ENCODE measurements at regions of chr3 and their contacts with region 1.

Region 1: GRCh38 chr3:98039322-98040024 is 4.4 kb upstream of the GABRR3 start:
- DNase-seq: peak; percentile 20 to 65 (median 47)
- ATAC-seq: peak; percentile 87
- H3K4me3 ChIP-seq: no peak overlapping the region
- H3K27ac ChIP-seq: no peak overlapping the region
- H3K4me1 ChIP-seq: no peaks in the 10 kb centered on the region
- H3K27me3 ChIP-seq: no peaks in the 10 kb centered on the region
- CTCF ChIP-seq: peak; percentile 55 to 72 (median 56)
- EP300 ChIP-seq: no peak
- POLR2A ChIP-seq: no peak
- RAD21 ChIP-seq: peak; percentile 59 to 73

Region 2: GRCh38 chr3:98027085-98027446 is 12.4 kb before region 1 on chr3:
- CTCF ChIA-PET with region 1: no interaction called
- POLR2A ChIA-PET with region 1: no interaction called
- in situ Hi-C with region 1: no loop called
- intact Hi-C with region 1: no loop called
- DNase-seq: no peak
- ATAC-seq: no peak
- H3K4me3 ChIP-seq: no peak overlapping the region
- H3K27ac ChIP-seq: no peak overlapping the region
- H3K4me1 ChIP-seq: no peaks in the 10 kb centered on the region
- H3K27me3 ChIP-seq: no peaks in the 10 kb centered on the region
- CTCF ChIP-seq: no peak
- EP300 ChIP-seq: no peak
- POLR2A ChIP-seq: no peak
- RAD21 ChIP-seq: no peak

Region 3: GRCh38 chr3:98329392-98330124 is 290.1 kb after region 1 on chr3:
- CTCF ChIA-PET with region 1: interaction called, 5 read pairs
- POLR2A ChIA-PET with region 1: no interaction called
- in situ Hi-C with region 1: loop called (anchors 5 kb)
- intact Hi-C with region 1: loop called (anchors 1 kb)
- DNase-seq: peak; percentile 8 to 42 (median 10)
- ATAC-seq: peak; percentile 70
- H3K4me3 ChIP-seq: no peak overlapping the region
- H3K27ac ChIP-seq: no peak overlapping the region
- H3K4me1 ChIP-seq: no peaks in the 10 kb centered on the region
- H3K27me3 ChIP-seq: no peaks in the 10 kb centered on the region
- CTCF ChIP-seq: peak; percentile 48 to 57 (median 56)
- EP300 ChIP-seq: no peak
- POLR2A ChIP-seq: no peak
- RAD21 ChIP-seq: peak; percentile 39 to 59; a peak in 3 of 4 replicates

Region 4: DNA sequence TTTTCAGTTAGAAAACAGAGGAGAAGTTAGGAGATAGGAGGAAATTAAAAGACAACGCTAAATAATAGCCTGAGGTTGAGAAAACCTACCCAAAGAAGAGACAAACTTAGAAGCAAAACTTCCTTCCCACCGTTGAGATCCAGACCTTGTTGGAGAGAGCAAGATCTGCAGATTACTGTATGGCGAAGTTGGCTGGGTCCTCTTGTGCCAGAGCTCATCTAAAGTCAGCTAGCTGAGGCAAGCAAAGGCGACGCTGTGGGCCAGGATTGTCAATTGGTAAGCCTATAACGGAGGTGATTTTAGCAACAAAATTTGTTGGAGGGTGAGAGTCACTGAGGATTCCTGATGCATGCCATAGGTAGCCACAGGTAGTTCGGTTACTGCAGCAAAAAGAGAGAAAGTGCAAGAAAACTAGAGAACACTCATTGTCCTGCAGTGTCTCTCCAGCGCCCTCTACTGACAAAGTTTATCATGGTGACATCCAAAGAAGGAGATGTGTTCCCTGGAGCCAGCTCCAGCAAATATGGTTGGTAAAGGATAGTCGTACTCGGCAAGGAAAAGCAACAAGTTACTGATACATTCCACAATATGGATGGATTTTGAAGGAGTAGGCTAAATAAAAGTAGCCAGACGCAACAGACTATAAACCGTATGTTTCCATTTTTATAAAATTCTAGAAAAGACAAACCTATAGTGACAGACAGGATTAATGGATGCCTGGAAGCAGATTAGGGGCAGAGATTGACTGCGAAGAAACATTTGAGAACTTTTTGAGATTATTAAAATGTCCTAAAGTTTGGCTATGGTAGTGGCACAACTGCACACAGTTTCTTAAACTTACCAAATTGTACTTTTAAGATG is 304.4 kb after region 1 on chr3:
- CTCF ChIA-PET with region 1: interaction called, 3 read pairs
- POLR2A ChIA-PET with region 1: no interaction called
- in situ Hi-C with region 1: no loop called
- intact Hi-C with region 1: loop called (anchors 1 kb)
- DNase-seq: peak; percentile 19 to 63 (median 28)
- ATAC-seq: peak; percentile 74
- H3K4me3 ChIP-seq: no peak overlapping the region
- H3K27ac ChIP-seq: no peak overlapping the region
- H3K4me1 ChIP-seq: no peaks in the 10 kb centered on the region
- H3K27me3 ChIP-seq: no peaks in the 10 kb centered on the region
- CTCF ChIP-seq: peak; percentile 47 to 66 (median 57); a peak in 5 of 6 replicates
- EP300 ChIP-seq: no peak
- POLR2A ChIP-seq: no peak
- RAD21 ChIP-seq: peak in 1 of 2 experiments; percentile 40; a peak in 1 of 4 replicates

Region 5: DNA sequence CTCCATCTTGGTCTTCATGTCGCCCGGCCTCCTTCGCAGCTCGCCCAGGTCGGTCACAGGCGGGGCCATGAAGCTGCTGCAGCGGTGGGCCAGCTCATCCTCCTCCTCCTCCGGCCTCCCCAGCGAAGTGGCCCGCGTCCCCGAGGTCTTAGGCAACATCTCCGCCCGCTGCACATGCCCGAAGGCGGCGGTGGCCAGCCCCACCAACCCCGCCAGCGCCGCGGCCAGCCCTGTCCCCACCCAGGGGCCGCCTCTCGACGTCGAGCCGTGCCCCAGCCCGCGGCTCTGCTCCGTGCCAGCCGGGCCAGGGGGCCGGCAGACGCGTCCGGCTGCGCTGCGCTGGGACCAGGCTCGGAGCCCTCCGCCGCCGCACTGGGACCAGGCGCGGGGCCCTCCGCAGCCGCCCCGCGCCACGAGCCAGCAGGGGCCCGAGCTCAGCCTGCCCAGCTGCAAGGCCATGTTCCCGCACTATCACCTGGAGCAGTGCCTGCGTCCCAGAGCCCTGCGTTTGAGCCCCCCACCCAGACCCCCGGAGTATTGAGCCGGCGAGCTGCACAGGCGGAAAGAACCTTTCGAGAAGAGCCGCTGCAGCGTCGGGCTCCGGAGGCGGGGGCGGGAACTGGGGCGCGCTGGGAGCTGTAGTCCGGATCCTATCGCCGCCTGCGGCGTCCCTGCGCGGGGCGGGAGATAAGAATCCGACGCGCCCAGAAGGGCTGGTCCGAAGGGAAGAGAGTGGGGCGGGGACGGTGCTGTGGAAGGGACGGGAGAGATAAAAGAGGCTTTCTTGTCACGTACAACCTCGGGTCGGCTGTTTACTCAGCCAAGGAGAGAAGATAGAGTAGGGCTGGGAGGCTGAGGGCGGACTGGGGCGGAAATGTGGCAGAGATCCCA is 553.8 kb after region 1 on chr3 and contains the start of gene CPOX:
- CTCF ChIA-PET with region 1: no interaction called
- POLR2A ChIA-PET with region 1: no interaction called
- in situ Hi-C with region 1: no loop called
- intact Hi-C with region 1: loop called (anchors 10 kb)
- DNase-seq: peak; percentile 74 to 95 (median 83)
- ATAC-seq: peak; percentile 98
- H3K4me3 ChIP-seq: peak within 1 kb of the TSS; percentile 83
- H3K27ac ChIP-seq: peak within 1 kb of the TSS; percentile 84
- H3K4me1 ChIP-seq: peaks cover 14 to 24% of the 10 kb centered on the region in 2 experiments; a peak in 4 of 5 replicates
- H3K27me3 ChIP-seq: no peaks in the 10 kb centered on the region
- CTCF ChIP-seq: no peak
- EP300 ChIP-seq: peak; percentile 51; the same call in 1 of the 2 replicates
- POLR2A ChIP-seq: peak; percentile 79
- RAD21 ChIP-seq: no peak
- polyA plus RNA-seq, gene CPOX: 14.6 to 17.4 TPM

Region 6: DNA sequence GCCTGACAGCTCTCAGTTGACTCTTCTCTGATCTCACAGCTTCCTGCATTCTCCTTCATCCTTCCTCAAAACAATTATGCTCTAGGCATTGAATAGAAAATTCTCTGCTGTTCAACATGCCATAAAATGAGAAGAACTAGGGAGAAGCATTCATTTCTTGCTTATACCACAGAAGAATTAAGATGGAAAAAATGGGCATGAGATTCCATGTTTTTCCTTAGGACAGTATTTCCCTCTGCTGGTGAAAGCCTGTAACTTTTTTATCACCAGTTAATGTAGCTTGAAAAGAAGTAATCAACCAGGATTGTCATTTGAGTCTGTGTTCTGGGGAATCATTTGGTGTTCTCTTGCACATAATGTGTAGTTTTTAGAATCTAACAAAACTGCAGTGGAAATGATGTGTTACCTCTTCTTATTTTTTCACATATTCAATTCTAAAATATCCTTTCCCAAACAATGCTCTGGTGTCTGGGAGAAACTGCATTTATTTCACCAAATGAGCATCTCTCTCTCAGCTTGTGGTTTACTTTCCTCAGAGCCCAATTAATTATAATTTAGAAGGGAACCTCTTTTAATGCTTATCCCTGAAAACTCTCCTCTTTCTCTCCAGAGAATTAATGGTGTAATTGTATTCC is 954.8 kb after region 1 on chr3:
- CTCF ChIA-PET with region 1: interaction called, 3 read pairs
- POLR2A ChIA-PET with region 1: no interaction called
- in situ Hi-C with region 1: no loop called
- intact Hi-C with region 1: loop called (anchors 10 kb)
- DNase-seq: peak in 2 of 4 experiments; percentile 7 to 23
- ATAC-seq: no peak
- H3K4me3 ChIP-seq: no peak overlapping the region
- H3K27ac ChIP-seq: no peak overlapping the region
- H3K4me1 ChIP-seq: no peaks in the 10 kb centered on the region; a peak in 1 of 5 replicates
- H3K27me3 ChIP-seq: no peaks in the 10 kb centered on the region
- CTCF ChIP-seq: peak; percentile 31 to 60 (median 38); a peak in 4 of 6 replicates
- EP300 ChIP-seq: no peak
- POLR2A ChIP-seq: no peak
- RAD21 ChIP-seq: peak; percentile 66 to 79

Measured in K562 (cell line).